PC-3 (cell line): ENCODE measurements at regions of chr19 and their contacts with region 1.

Region 1: DNA sequence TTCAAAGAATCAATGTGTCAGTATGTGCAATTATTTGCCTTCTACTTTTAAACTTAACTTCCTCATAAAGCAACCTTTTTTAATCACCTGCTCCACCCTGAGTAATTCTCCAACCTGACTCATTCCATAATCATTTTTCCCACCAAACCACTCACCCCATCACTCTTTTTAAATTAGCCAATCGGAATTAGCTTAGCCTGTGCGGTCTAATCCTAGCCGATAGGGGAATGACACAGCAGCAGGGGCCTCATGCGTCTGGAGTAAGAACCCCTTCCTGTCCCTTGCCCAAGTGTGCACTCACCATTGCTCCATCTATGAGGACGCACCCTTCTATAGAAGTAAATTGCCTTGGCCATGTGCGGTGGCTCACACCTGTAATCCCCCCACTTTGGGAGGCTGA is 27.4 kb upstream of the ZNF83 start:
- DNase-seq: peak; percentile 89
- ATAC-seq: peak; percentile 58
- H3K4me3 ChIP-seq: no peak overlapping the region
- H3K27ac ChIP-seq: peak overlapping the region; percentile 88
- H3K4me1 ChIP-seq: peaks cover 45% of the 10 kb centered on the region
- H3K27me3 ChIP-seq: no peaks in the 10 kb centered on the region
- CTCF ChIP-seq: no peak

Region 2: GRCh38 chr19:52690369-52691214 is 25.1 kb after region 1 on chr19:
- CTCF ChIA-PET with region 1: no interaction called
- POLR2A ChIA-PET with region 1: no interaction called
- intact Hi-C with region 1: loop called (anchors 2 kb)
- DNase-seq: peak; percentile 97
- ATAC-seq: peak; percentile 98
- H3K4me3 ChIP-seq: peak overlapping the region; percentile 99
- H3K27ac ChIP-seq: peak overlapping the region; percentile 81
- H3K4me1 ChIP-seq: peaks cover 32% of the 10 kb centered on the region
- H3K27me3 ChIP-seq: no peaks in the 10 kb centered on the region
- CTCF ChIP-seq: no peak

Region 3: GRCh38 chr19:52722062-52723003 is 56.8 kb after region 1 on chr19:
- CTCF ChIA-PET with region 1: no interaction called
- POLR2A ChIA-PET with region 1: no interaction called
- intact Hi-C with region 1: loop called (anchors 10 kb)
- DNase-seq: peak; percentile 99
- ATAC-seq: peak; percentile 93
- H3K4me3 ChIP-seq: no peak overlapping the region; the same call in 1 of the 2 replicates
- H3K27ac ChIP-seq: peak overlapping the region; percentile 87
- H3K4me1 ChIP-seq: peaks cover 21% of the 10 kb centered on the region
- H3K27me3 ChIP-seq: no peaks in the 10 kb centered on the region
- CTCF ChIP-seq: no peak

Region 4: DNA sequence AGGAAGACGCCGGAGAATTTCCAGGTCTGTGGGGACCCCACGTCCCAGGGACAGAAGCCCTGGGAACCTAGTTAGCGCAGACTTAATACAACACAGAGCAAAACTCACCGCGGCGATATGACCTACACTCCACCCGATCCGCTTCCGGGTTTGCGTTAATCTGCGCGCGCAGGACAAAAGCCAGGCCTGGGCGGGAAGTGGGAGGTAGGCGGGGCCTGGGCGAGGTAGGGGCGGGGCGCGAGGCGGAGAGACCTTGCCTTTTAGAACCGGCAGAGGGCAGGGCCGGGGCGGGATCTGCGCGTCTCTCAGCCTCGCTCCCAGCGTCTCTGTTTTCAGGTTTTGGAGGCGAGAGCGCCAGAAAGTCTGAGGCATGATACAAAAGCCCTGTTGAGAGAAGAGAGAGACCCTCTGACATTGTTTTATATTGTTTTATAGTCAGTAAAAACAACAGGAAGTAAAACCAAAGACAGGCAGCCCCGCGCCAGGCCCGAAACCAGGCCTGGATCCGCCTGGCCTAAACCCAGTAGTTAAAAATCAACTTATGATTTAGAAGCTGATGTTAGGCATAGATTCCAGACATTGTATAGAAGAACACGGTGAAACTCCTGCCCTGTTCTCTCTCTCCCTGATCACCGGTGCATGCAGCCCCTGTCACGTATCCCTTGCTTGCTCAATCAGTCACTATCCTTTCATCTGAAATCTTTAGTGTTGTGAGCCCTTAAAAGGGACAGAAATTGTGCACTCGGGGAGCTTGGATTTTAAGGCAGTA is 69.5 kb after region 1 on chr19 and contains the start of gene ZNF611:
- CTCF ChIA-PET with region 1: no interaction called
- POLR2A ChIA-PET with region 1: no interaction called
- intact Hi-C with region 1: no loop called
- DNase-seq: peak; percentile 97
- ATAC-seq: peak; percentile 95
- H3K4me3 ChIP-seq: peak within 1 kb of the TSS; percentile 84
- H3K27ac ChIP-seq: peak within 1 kb of the TSS; percentile 44
- H3K4me1 ChIP-seq: peaks cover 9% of the 10 kb centered on the region; the same call in 1 of the 2 replicates
- H3K27me3 ChIP-seq: no peaks in the 10 kb centered on the region
- CTCF ChIP-seq: peak; percentile 52
- total RNA-seq, gene ZNF611: 8.4 and 12.7 TPM in 2 replicates

Region 5: DNA sequence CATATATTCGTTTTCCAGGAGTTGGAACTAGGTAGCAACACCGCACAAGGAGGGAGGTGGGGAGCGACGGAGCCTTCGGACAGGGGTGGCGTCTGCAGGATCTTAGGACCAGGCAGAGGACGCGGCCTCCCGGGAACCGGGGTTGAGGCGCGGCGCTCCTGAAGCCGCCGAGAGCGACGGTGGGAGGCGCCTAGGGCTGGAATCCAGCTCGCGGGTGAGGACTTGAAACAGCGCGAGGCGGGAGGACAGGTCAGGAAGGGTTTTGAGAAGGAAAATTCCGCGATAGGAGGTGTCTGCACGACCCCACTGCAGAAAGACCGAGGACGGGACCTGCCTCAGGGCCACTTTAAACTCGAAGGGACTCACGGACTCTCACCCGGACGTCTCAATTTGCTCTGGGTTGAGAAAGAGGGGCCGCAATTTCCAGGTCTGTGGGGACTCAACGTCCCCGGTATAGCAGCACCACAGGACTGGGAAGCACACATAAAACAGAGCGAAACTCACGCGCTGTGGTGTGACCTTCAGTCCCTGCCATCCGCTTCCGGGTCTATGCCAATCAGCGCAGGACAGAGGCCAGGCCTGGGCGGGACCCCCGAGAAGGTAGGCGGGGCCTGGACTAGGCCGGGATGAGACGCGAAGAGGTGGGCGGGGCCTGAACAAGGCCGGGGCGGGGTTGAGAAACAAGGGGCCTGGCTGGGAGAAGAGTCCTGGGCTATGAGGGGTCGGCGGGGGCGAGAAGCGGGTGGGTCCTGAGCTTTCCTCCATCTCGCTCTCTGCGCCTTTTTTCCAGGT is 231.8 kb after region 1 on chr19 and contains the start of gene ZNF320:
- CTCF ChIA-PET with region 1: no interaction called
- POLR2A ChIA-PET with region 1: no interaction called
- intact Hi-C with region 1: no loop called
- DNase-seq: peak; percentile 95
- ATAC-seq: peak; percentile 100
- H3K4me3 ChIP-seq: peak within 1 kb of the TSS; percentile 87
- H3K27ac ChIP-seq: peak within 1 kb of the TSS; percentile 78
- H3K4me1 ChIP-seq: no peaks in the 10 kb centered on the region
- H3K27me3 ChIP-seq: no peaks in the 10 kb centered on the region
- CTCF ChIP-seq: no peak
- total RNA-seq, gene ZNF320: 7.7 and 10.6 TPM in 2 replicates